ENCODE measurements at regions of chr20 and their contacts with region 1.

Region 1: GRCh38 chr20:31849455-31849925 is 4.1 kb upstream of the FOXS1 start:
- H3K4me3 Mint-ChIP-seq: no peak overlapping the region
- H3K27ac Mint-ChIP-seq: no peak overlapping the region
- H3K4me1 Mint-ChIP-seq: no peaks in the 10 kb centered on the region
- H3K27me3 Mint-ChIP-seq: peaks cover 35% of the 10 kb centered on the region

Region 2: GRCh38 chr20:31707994-31708735 is 141.3 kb before region 1 on chr20:
- intact Hi-C with region 1: no loop called
- H3K4me3 Mint-ChIP-seq: peak overlapping the region; percentile 9
- H3K27ac Mint-ChIP-seq: peak overlapping the region; percentile 18
- H3K4me1 Mint-ChIP-seq: peaks cover 69% of the 10 kb centered on the region
- H3K27me3 Mint-ChIP-seq: no peaks in the 10 kb centered on the region

Region 3: DNA sequence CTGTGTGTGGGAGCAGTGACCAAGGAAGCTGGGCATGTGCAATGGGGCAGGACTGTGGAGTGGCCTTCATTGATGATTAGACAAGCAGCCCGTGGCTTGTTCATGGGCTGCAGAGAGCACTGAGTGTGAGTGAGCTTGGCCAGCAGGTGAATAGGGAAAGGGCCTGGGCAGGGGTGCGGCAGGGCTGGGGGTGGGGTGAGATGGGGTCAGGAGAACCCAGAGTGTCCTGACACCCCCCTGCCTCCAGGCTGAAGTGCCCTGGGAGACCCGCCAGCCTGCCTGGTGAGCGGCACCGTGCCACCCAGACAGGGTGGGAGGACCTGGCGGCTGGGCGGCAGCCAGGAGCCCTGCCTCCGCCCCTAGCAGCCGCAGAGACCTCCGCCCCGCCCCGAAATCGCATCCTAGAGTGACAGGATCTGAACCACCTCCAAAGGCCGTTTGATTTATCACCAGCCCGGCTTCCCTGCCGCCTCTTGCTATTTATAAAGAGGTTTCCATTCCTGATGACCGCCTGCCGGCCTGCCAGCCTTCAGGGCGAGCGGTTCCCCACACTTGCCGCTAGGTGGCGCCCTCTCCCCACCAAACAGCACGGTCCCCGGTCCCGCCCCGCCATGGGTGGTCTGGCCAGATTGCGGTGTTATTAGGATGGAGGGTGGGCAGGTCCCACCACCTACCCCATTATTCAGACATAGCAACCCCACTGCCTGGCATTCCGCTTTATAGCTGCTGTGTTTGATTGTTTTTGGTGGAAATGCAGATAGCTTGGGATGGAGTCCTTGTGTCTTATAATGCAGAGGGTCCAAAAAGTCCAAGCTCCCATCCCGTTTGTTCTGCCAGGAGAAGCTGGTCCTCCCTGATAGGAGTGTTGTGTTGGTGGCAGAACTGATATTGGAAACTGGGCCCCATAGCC is 26.8 kb before region 1 on chr20:
- intact Hi-C with region 1: loop called (anchors 1 kb)
- H3K4me3 Mint-ChIP-seq: no peak overlapping the region
- H3K27ac Mint-ChIP-seq: no peak overlapping the region
- H3K4me1 Mint-ChIP-seq: no peaks in the 10 kb centered on the region
- H3K27me3 Mint-ChIP-seq: peaks cover 12% of the 10 kb centered on the region

Region 4: GRCh38 chr20:31951530-31952453 is 102.3 kb after region 1 on chr20 and contains the start of gene PDRG1:
- intact Hi-C with region 1: loop called (anchors 1 kb)
- H3K4me3 Mint-ChIP-seq: peak within 1 kb of the TSS; percentile 93
- H3K27ac Mint-ChIP-seq: peak within 1 kb of the TSS; percentile 92
- H3K4me1 Mint-ChIP-seq: peaks cover 43% of the 10 kb centered on the region
- H3K27me3 Mint-ChIP-seq: peaks cover 25% of the 10 kb centered on the region

Region 5: DNA sequence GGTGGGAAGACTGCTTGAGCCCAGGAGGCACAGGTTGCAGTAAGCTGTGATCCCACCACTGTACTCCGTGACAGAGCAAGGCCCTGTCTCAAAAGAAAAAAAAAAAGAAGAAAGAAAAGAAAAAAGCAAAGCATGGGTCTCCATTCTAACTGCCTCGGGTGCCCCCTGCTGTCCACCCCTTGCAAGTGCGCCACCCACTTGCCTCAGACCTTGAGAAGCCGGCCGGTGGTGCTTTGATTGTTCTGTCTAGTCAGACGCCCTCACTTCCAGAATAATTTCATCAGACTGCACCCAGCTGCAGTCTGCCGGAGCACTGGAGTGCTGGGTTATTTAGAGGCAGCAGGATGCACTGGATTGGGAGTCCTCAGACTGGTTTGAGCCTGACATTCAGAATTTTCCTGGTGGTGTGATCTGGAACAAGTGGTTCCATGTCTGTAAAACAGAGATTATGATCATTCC is 242.4 kb after region 1 on chr20:
- intact Hi-C with region 1: loop called (anchors 5 kb)
- H3K4me3 Mint-ChIP-seq: no peak overlapping the region
- H3K27ac Mint-ChIP-seq: no peak overlapping the region
- H3K4me1 Mint-ChIP-seq: peaks cover 23% of the 10 kb centered on the region
- H3K27me3 Mint-ChIP-seq: no peaks in the 10 kb centered on the region

Measured in dendritic cell treated with granulocyte-macrophage colony-stimulating factor and Interleukin-4, amounts not matched to agents 40 ng/mL and 50 ng/mL, for 4 days (primary cell).